ENCODE measurements at regions of chr9 and their contacts with region 1.

Region 1: DNA sequence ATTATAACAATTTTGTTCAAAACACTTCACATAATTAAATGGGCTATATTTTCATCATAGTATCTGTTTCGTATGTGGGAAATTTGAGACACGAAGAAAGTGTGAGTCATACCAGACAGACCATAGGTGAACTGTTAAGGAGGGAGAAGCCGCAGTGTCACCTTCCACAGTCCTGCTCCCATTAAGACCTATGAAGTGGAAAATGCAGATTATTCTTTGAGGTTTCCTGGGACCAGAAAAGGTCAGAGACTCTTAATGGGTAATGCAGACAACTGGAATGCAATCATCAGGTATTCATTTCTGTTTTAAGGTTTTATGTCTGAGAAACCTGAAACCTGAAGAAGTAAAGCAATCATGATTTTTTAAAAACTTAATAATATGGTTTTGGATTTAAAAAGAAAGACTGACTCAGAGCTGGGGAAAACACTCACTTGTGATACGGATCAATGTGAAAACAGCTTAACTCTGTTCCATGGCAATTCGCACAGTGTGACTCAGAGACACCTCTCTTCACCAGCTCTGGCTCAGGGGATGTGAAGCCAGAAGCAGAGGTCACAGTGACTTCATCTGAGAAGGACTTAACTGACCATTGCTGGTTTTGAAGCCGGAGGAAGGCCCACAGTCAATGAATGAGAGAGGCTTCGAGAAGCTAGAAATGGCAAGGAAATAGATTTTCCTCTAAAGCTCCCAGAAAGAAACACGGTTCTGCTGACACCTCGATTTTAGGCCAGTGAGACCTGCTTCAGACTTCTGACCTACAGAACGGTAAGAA is 17.2 kb upstream of the GCNT1 start:
- DNase-seq: no peak
- ATAC-seq: 0 out of 6 replicates have a peak, but pooled peaks of 1 of the 2 experiments have one; percentile 24
- H3K4me3 ChIP-seq: no peak overlapping the region
- H3K27ac ChIP-seq: no peak overlapping the region
- H3K4me1 ChIP-seq: no peaks in the 10 kb centered on the region
- CTCF ChIP-seq: no peak
- EP300 ChIP-seq: no peak
- POLR2A ChIP-seq: no peak
- RAD21 ChIP-seq: no peak

Region 2: DNA sequence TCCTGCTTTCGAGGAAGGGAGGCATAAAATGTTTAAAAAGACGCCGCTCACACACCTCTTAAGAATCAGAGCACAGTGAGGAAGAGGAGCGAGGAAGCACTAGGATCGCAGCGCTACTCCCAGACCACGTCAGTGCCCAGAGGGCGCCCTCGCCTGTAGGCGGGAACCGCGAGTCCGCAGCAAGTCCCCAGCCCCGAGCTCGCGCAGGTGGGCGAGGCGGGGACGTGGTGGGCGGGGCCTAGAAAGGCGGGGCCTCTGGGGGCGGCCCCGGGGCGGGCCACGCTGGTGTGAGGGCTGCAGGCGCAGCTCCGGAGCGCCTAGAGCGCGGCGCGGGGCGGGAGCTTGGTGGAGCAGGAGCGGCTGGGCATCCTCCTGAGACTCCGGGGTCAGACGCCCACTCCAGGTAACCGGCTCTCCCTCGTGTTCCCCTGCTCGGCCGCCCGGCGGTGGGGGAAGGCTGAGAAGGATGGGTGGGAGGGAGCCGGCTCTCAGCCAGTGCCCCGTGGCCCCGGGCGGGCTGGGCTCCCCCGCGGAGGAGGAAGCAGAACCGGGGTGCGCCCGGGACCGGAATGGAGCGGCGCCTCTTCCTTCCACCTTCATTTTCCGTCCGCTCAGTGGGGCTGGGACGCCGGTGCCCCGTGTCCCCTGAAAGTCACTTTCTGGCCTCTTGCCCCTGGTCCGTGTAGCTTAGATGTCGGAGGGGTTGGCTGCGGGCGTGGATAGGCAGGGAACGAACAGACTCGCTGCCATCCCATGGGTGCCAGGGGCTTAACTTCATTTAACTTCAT is 17.4 kb after region 1 on chr9 and contains the start of gene GCNT1:
- CTCF ChIA-PET with region 1: interaction called, 30 read pairs
- POLR2A ChIA-PET with region 1: interaction called, 7 read pairs
- DNase-seq: peak; percentile 87 to 88
- ATAC-seq: peak; percentile 91 to 98
- H3K4me3 ChIP-seq: peak within 1 kb of the TSS; percentile 70
- H3K27ac ChIP-seq: peak within 1 kb of the TSS; percentile 48 to 80; a peak in 5 of 6 replicates
- H3K4me1 ChIP-seq: peaks cover 22% of the 10 kb centered on the region
- CTCF ChIP-seq: peak; percentile 53
- EP300 ChIP-seq: no peak
- POLR2A ChIP-seq: peak; percentile 50
- RAD21 ChIP-seq: peak; percentile 35 to 40; a peak in 4 of 5 replicates
- polyA plus RNA-seq, gene GCNT1: 2.2 and 3.3 TPM in 2 replicates

Region 3: GRCh38 chr9:76658535-76659231 is 216.9 kb after region 1 on chr9:
- CTCF ChIA-PET with region 1: interaction called, 28 read pairs
- POLR2A ChIA-PET with region 1: no interaction called
- DNase-seq: peak; percentile 35 to 37
- ATAC-seq: peak; percentile 92
- H3K4me3 ChIP-seq: no peak overlapping the region
- H3K27ac ChIP-seq: no peak overlapping the region
- H3K4me1 ChIP-seq: no peaks in the 10 kb centered on the region
- CTCF ChIP-seq: peak; percentile 62
- EP300 ChIP-seq: no peak
- POLR2A ChIP-seq: no peak
- RAD21 ChIP-seq: peak; percentile 65 to 73

Measured in A549 (cell line).